H1 (cell line): ENCODE measurements at regions of chr6 and their contacts with region 1.

Region 1: GRCh38 chr6:169831450-169832246 is 80.2 kb downstream of the ERMARD start:
- DNase-seq: peak; percentile 79 to 97
- H3K4me3 ChIP-seq: no peak overlapping the region
- H3K27ac ChIP-seq: no peak overlapping the region
- H3K4me1 ChIP-seq: peaks cover 0 to 15% (median 4%) of the 10 kb centered on the region in 4 experiments; a peak in 6 of 7 replicates
- H3K27me3 ChIP-seq: peaks cover 0 to 6% (median 0%) of the 10 kb centered on the region in 4 experiments; a peak in 2 of 7 replicates
- CTCF ChIP-seq: peak; percentile 89 to 97 (median 96)
- EP300 ChIP-seq: no peak
- POLR2A ChIP-seq: no peak
- RAD21 ChIP-seq: peak; percentile 88 to 91

Region 2: GRCh38 chr6:169689247-169689646 is 142.4 kb before region 1 on chr6:
- CTCF ChIA-PET with region 1: no interaction called
- POLR2A ChIA-PET with region 1: no interaction called
- DNase-seq: no peak
- H3K4me3 ChIP-seq: no peak overlapping the region
- H3K27ac ChIP-seq: no peak overlapping the region
- H3K4me1 ChIP-seq: no peaks in the 10 kb centered on the region
- H3K27me3 ChIP-seq: no peaks in the 10 kb centered on the region
- CTCF ChIP-seq: no peak
- EP300 ChIP-seq: no peak
- POLR2A ChIP-seq: no peak
- RAD21 ChIP-seq: no peak

Region 3: DNA sequence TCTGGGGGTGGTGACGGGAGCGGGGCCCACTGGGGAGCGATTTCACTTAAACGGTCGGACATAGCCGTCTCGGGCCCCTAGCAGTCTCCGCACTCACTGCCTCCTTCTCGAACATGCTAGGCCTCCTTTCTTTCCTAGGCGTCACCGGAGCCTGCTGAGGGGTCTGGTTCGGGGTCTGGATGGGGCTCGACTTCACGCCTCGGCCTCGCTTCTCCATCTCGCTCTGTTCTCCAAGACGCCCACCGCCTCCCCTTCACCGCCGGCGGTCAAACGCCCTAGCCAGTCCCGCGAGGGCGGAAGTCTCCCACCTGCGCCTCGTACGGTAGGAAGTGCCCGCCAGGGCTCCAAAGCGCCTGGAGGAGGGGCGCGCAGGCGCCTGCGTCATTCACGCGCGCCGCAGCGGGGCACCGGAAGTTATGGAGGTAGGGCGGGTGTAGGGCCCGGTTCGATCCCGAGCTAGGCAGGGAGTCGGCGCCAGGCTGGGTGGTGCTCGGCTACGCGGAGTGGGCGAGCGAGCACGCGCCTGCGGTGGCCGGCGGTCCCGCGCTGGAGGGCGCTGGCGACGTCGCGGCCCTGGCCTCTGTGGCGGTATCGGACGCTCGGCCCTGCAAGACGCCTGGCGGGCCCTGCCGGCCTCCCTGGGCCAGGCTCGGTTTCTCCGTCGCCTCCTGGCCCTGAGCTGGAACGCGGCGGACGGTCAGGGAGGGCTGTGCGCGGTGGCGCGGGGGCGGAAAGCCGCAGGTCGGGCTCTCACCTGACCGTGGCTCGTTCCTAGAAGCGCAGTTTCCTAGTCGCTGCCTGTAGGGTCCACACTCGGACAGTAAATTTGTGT is 80.2 kb before region 1 on chr6 and contains the starts of genes DYNLT2 and ERMARD:
- CTCF ChIA-PET with region 1: no interaction called
- POLR2A ChIA-PET with region 1: no interaction called
- DNase-seq: peak; percentile 77 to 97
- H3K4me3 ChIP-seq: peak within 1 kb of the TSS; percentile 58 to 94 (median 91)
- H3K27ac ChIP-seq: peak within 1 kb of the TSS; percentile 97
- H3K4me1 ChIP-seq: peaks cover 0 to 12% (median 6%) of the 10 kb centered on the region in 4 experiments; a peak in 5 of 7 replicates
- H3K27me3 ChIP-seq: no peaks in the 10 kb centered on the region
- CTCF ChIP-seq: peak; percentile 1 to 6 (median 3); a peak in 2 of 4 replicates
- EP300 ChIP-seq: peak in 1 of 2 experiments; percentile 13; a peak in 1 of 3 replicates
- POLR2A ChIP-seq: peak; percentile 94 to 96
- RAD21 ChIP-seq: no peak
- total RNA-seq, gene DYNLT2: 1.6 and 1.8 TPM in 2 replicates
- total RNA-seq, gene ERMARD: 11.2 and 12.2 TPM in 2 replicates

Region 4: DNA sequence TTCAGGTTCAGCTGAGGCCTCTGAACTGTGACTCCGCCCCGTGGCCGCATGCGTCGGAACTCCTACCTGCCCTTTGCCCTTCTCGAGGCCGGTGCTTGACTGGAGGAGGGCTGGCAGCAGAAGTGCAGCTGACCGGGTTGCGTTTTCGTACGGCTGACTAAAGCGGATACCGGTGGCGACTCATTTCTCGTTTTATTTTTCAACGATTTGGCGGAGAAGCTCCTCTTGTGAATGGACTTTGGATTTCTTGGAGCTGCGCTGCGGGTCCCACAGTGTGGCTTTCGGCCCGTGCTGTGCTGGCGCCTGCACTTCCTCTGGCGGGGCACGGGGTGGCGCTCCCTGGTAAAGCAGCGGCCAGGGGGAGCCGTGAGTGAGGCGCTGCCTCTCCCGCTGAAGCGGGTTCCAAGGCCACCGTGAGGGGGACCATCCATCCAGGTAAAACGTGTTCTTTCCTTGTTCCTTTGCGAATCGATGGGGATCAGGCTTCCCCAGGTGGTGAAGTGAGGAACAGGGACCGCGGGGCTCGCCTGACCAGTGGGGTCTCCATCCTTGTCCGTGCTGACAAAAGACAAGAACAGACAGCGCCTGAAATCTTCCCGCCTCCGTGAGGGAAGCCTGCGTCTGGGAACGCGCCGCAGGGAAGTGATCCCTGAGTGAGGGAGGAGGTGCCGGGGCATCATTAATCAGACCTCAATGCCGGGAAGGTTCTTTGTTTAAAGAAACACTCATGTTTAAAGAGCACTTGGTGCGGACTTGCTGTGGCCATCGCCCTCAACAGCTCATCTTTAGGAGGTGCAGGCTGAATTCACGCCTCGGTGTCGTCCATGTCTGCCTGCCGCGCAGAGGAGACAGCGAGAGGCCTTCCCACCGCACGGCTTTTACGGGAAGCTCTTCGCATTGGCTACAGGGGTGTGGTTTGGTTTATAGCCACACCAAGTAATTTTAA is 41.4 kb before region 1 on chr6:
- CTCF ChIA-PET with region 1: interaction called, 11 read pairs
- POLR2A ChIA-PET with region 1: no interaction called
- DNase-seq: peak; percentile 56 to 90
- H3K4me3 ChIP-seq: peak overlapping the region; percentile 5 to 51 (median 33); a peak in 7 of 8 replicates
- H3K27ac ChIP-seq: no peak overlapping the region
- H3K4me1 ChIP-seq: peaks cover 0 to 12% (median 4%) of the 10 kb centered on the region in 4 experiments; a peak in 5 of 7 replicates
- H3K27me3 ChIP-seq: peaks cover 0 to 12% (median 4%) of the 10 kb centered on the region in 4 experiments; a peak in 4 of 7 replicates
- CTCF ChIP-seq: peak; percentile 91 to 98 (median 96)
- EP300 ChIP-seq: 0 out of 3 replicates have a peak, but pooled peaks of 1 of the 2 experiments have one; percentile 14
- POLR2A ChIP-seq: peak in 1 of 2 experiments; percentile 45; a peak in 2 of 3 replicates
- RAD21 ChIP-seq: peak; percentile 95 to 96

Region 5: DNA sequence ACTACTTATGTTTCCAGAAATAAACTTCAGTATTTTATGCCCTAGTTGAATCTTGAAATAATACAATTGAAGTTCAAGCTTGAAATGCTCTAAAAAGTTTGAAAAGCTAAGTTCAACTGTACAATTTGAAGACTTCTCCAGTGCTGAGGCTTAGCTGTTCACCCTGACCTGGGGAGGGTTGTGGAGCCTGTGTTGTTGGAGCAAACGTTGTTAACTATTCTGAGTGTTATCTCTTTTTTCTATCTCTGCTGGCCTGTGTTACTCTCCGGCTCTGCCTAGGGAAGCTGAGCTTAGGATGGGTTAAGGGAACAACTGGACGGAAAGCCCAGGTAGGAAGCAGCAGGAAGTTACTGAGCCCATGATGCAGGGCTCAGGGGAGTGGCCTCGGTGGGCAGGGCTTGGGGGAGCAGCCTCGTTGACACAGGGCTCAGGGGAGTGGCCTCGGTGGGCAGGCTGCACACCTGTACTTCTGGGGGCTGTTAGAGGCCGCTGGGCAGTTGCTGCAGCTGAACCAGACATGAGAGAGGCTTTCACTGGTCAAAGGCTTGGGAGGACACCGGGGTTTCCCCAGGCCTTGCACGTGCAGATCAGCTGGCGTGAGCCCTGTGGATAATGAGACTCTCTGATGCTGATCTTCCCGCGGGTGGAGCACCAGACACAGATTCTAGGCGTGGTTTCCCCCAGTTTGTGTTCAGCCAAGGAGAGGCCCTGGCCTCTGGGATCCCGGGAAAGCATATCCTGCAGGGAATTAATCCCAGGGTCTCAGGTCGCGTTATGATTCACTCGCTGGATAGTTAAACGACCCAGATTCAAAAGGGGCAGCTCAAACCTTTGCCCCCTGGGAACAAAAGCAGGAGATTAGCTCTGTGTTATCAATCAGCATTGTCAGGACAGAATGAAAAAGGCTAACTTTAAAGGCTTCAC is 21.3 kb before region 1 on chr6:
- CTCF ChIA-PET with region 1: interaction called, 39 read pairs
- POLR2A ChIA-PET with region 1: no interaction called
- DNase-seq: peak in 1 of 2 experiments; percentile 76
- H3K4me3 ChIP-seq: no peak overlapping the region
- H3K27ac ChIP-seq: no peak overlapping the region
- H3K4me1 ChIP-seq: peaks cover 0 to 9% (median 3%) of the 10 kb centered on the region in 4 experiments; a peak in 4 of 7 replicates
- H3K27me3 ChIP-seq: peaks cover 0 to 3% (median 0%) of the 10 kb centered on the region in 4 experiments; a peak in 1 of 7 replicates
- CTCF ChIP-seq: no peak
- EP300 ChIP-seq: no peak
- POLR2A ChIP-seq: no peak
- RAD21 ChIP-seq: no peak

Region 6: GRCh38 chr6:169851641-169852503 is 20.2 kb after region 1 on chr6:
- CTCF ChIA-PET with region 1: interaction called, 85 read pairs
- POLR2A ChIA-PET with region 1: no interaction called
- DNase-seq: peak in 1 of 2 experiments; percentile 46
- H3K4me3 ChIP-seq: no peak overlapping the region
- H3K27ac ChIP-seq: no peak overlapping the region
- H3K4me1 ChIP-seq: no peaks in the 10 kb centered on the region; a peak in 1 of 7 replicates
- H3K27me3 ChIP-seq: no peaks in the 10 kb centered on the region
- CTCF ChIP-seq: no peak
- EP300 ChIP-seq: no peak
- POLR2A ChIP-seq: no peak
- RAD21 ChIP-seq: no peak

Region 7: DNA sequence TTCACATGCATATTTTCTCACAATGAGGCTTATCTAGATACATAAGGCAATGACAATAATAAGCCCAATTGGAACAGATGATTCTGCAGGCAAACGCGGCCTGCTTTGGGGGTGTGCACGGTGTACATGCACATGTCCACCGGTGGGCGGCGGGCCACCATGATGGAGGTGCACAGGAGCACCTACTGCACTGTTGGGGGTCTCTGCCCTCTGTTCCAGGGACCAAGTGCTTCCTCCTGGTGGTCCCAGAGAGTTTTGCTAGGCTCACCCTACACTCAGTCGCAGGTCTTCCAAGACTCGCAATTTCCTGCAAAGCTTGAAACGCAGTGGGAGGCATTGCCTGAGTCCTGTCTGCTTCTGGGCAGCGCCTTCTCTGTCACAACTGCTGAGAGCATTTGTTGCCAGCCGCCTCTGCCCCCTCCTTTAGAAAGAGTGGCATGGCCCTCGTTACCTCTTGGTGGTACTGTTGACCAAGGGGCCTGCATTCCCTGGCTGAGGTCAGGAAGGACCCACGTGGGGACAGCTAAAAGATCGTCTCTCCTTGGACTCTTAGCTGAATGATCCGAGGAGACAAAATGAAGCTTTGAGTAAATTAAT is 55.1 kb after region 1 on chr6:
- CTCF ChIA-PET with region 1: interaction called, 13 read pairs
- POLR2A ChIA-PET with region 1: no interaction called
- DNase-seq: peak in 1 of 2 experiments; percentile 26
- H3K4me3 ChIP-seq: no peak overlapping the region
- H3K27ac ChIP-seq: no peak overlapping the region
- H3K4me1 ChIP-seq: no peaks in the 10 kb centered on the region
- H3K27me3 ChIP-seq: no peaks in the 10 kb centered on the region; a peak in 3 of 7 replicates
- CTCF ChIP-seq: peak; percentile 6 to 30 (median 20)
- EP300 ChIP-seq: no peak
- POLR2A ChIP-seq: no peak
- RAD21 ChIP-seq: peak in 1 of 2 experiments; percentile 4; a peak in 1 of 4 replicates

Region 8: GRCh38 chr6:169930799-169931198 is 99.2 kb after region 1 on chr6:
- CTCF ChIA-PET with region 1: interaction called, 14 read pairs
- POLR2A ChIA-PET with region 1: no interaction called
- DNase-seq: peak in 1 of 2 experiments; percentile 46
- H3K4me3 ChIP-seq: no peak overlapping the region
- H3K27ac ChIP-seq: no peak overlapping the region
- H3K4me1 ChIP-seq: peaks cover 0 to 14% (median 8%) of the 10 kb centered on the region in 4 experiments; a peak in 6 of 7 replicates
- H3K27me3 ChIP-seq: peaks cover 0 to 15% (median 3%) of the 10 kb centered on the region in 4 experiments; a peak in 5 of 7 replicates
- CTCF ChIP-seq: peak in 2 of 3 experiments; percentile 60 to 65; a peak in 3 of 4 replicates
- EP300 ChIP-seq: no peak
- POLR2A ChIP-seq: no peak
- RAD21 ChIP-seq: peak; percentile 67 to 74